Aorta (tissue), 5 donors: ENCODE measurements at regions of chr9 and their contacts with region 1.

Region 1: GRCh38 chr9:113591001-113591898 is 127.7 kb downstream of the RGS3 start:
- DNase-seq: peak; percentile 84 to 94
- ATAC-seq: peak; percentile 50
- H3K4me3 ChIP-seq: no peak overlapping the region
- H3K27ac ChIP-seq: peak overlapping the region; percentile 15 to 28
- H3K4me1 ChIP-seq: no peaks in the 10 kb centered on the region
- H3K27me3 ChIP-seq: no peaks in the 10 kb centered on the region

Region 2: DNA sequence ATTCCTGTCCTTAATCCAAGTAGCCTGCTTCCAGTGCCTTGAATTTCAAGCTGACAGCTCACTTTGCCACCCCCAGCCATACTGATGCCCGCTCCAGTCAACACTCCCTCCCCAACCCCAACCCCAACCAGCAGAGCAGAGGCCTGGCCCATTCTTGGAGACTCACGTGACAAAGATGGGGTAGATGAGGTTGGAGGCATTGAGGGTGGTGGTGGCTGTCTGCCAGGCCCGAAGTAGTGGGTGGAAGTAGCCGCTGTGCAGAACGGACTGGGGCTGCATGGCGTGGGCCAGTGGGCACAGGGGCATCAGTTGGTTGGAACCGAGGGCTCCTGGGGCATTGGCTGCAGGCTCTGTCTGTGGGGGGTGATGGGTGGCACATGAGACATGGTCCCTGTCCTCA is 198.0 kb before region 1 on chr9:
- intact Hi-C with region 1: no loop called
- DNase-seq: peak in 1 of 2 donors; percentile 51
- ATAC-seq: no peak
- H3K4me3 ChIP-seq: no peak overlapping the region
- H3K27ac ChIP-seq: no peak overlapping the region
- H3K4me1 ChIP-seq: no peaks in the 10 kb centered on the region
- H3K27me3 ChIP-seq: no peaks in the 10 kb centered on the region

Region 3: GRCh38 chr9:113446323-113446740 is 144.9 kb before region 1 on chr9:
- intact Hi-C with region 1: loop called (anchors 2 kb)
- DNase-seq: no peak
- ATAC-seq: no peak
- H3K4me3 ChIP-seq: no peak overlapping the region
- H3K27ac ChIP-seq: peak overlapping the region in 1 of 2 donors; percentile 44
- H3K4me1 ChIP-seq: no peaks in the 10 kb centered on the region
- H3K27me3 ChIP-seq: no peaks in the 10 kb centered on the region

Region 4: GRCh38 chr9:113479174-113479621 is 112.1 kb before region 1 on chr9:
- intact Hi-C with region 1: no loop called
- DNase-seq: no peak
- ATAC-seq: no peak
- H3K4me3 ChIP-seq: no peak overlapping the region
- H3K27ac ChIP-seq: no peak overlapping the region
- H3K4me1 ChIP-seq: peaks cover 6 to 18% of the 10 kb centered on the region in 2 donors
- H3K27me3 ChIP-seq: no peaks in the 10 kb centered on the region

Region 5: GRCh38 chr9:113657703-113658544 is 66.7 kb after region 1 on chr9:
- intact Hi-C with region 1: loop called (anchors 1 to 2 kb)
- DNase-seq: peak; percentile 91 to 94
- ATAC-seq: peak; percentile 84
- H3K4me3 ChIP-seq: no peak overlapping the region
- H3K27ac ChIP-seq: no peak overlapping the region
- H3K4me1 ChIP-seq: no peaks in the 10 kb centered on the region
- H3K27me3 ChIP-seq: no peaks in the 10 kb centered on the region